ENCODE measurements at regions of chr11 and their contacts with region 1.

Region 1: GRCh38 chr11:114762408-114762807 is 84.1 kb downstream of the NXPE2 start:
- DNase-seq: peak in 4 of 14 experiments; percentile 6 to 40 (median 19)
- ATAC-seq: no peak
- H3K4me3 ChIP-seq: no peak overlapping the region
- H3K4me3 Mint-ChIP-seq: no peak overlapping the region
- H3K27ac ChIP-seq: no peak overlapping the region
- H3K27ac Mint-ChIP-seq: no peak overlapping the region
- H3K4me1 ChIP-seq: no peaks in the 10 kb centered on the region
- H3K4me1 Mint-ChIP-seq: no peaks in the 10 kb centered on the region
- H3K27me3 ChIP-seq: peaks cover 0 to 5% of the 10 kb centered on the region in 2 experiments
- H3K27me3 Mint-ChIP-seq: peaks cover 35% of the 10 kb centered on the region
- CTCF ChIP-seq: no peak

Region 2: GRCh38 chr11:114280696-114281095 is 481.7 kb before region 1 on chr11:
- CTCF ChIA-PET with region 1: no interaction called
- POLR2A ChIA-PET with region 1: no interaction called
- intact Hi-C with region 1: loop called in 1 of 2 experiments (anchors 5 kb)
- DNase-seq: peak in 4 of 14 experiments; percentile 13 to 40 (median 26)
- ATAC-seq: no peak
- H3K4me3 ChIP-seq: no peak overlapping the region
- H3K4me3 Mint-ChIP-seq: no peak overlapping the region
- H3K27ac ChIP-seq: no peak overlapping the region
- H3K27ac Mint-ChIP-seq: no peak overlapping the region
- H3K4me1 ChIP-seq: no peaks in the 10 kb centered on the region
- H3K4me1 Mint-ChIP-seq: no peaks in the 10 kb centered on the region
- H3K27me3 ChIP-seq: peaks cover 0 to 6% of the 10 kb centered on the region in 2 experiments
- H3K27me3 Mint-ChIP-seq: peaks cover 32% of the 10 kb centered on the region
- CTCF ChIP-seq: peak; percentile 14

Measured in CD4-positive, alpha-beta T cell (primary cell).